Activated CD8-positive, alpha-beta T cell treated with anti-CD3 and anti-CD28 coated beads for 36 hours (primary cell): ENCODE measurements at regions of chr6 and their contacts with region 1.

Region 1: GRCh38 chr6:31597006-31597405 is 4.2 kb upstream of the NCR3 start:
- DNase-seq: peak; percentile 71
- ATAC-seq: peak; percentile 68
- H3K4me3 Mint-ChIP-seq: no peak overlapping the region
- H3K27ac Mint-ChIP-seq: peak overlapping the region; percentile 37
- H3K4me1 Mint-ChIP-seq: peaks cover 43% of the 10 kb centered on the region
- H3K27me3 Mint-ChIP-seq: no peaks in the 10 kb centered on the region
- CTCF ChIP-seq: peak; percentile 80

Region 2: GRCh38 chr6:31580807-31581433 is 16.1 kb before region 1 on chr6:
- CTCF ChIA-PET with region 1: interaction called, 2,542 read pairs
- POLR2A ChIA-PET with region 1: interaction called, 1,181 read pairs
- intact Hi-C with region 1: loop called (anchors 1 kb)
- DNase-seq: peak; percentile 92
- ATAC-seq: peak; percentile 55
- H3K4me3 Mint-ChIP-seq: peak overlapping the region; percentile 96
- H3K27ac Mint-ChIP-seq: peak overlapping the region; percentile 98
- H3K4me1 Mint-ChIP-seq: peaks cover 47% of the 10 kb centered on the region
- H3K27me3 Mint-ChIP-seq: no peaks in the 10 kb centered on the region
- CTCF ChIP-seq: peak; percentile 97

Region 3: DNA sequence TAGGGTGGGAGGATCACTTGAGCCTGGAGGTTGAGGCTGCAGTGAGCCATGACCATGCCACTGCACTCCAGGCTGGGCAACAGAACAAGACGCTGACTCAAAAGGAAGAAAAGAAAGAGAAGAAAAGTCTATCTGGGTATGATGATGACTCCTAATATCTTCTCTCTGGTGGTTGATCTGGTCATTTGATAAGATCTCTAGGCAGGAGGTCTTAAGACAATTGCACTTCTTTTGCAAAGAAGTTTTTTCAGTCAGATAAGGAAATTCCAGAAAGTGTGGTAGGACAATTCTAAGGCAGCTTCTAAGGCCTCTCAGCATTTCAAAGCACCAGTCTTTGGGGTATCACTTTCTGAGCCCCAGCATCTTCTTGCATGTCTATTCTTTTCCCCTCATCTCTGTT is 10.3 kb after region 1 on chr6:
- CTCF ChIA-PET with region 1: interaction called, 132 read pairs
- POLR2A ChIA-PET with region 1: no interaction called
- intact Hi-C with region 1: no loop called
- DNase-seq: no peak
- ATAC-seq: no peak
- H3K4me3 Mint-ChIP-seq: no peak overlapping the region
- H3K27ac Mint-ChIP-seq: no peak overlapping the region
- H3K4me1 Mint-ChIP-seq: peaks cover 2% of the 10 kb centered on the region
- H3K27me3 Mint-ChIP-seq: no peaks in the 10 kb centered on the region
- CTCF ChIP-seq: no peak

Region 4: DNA sequence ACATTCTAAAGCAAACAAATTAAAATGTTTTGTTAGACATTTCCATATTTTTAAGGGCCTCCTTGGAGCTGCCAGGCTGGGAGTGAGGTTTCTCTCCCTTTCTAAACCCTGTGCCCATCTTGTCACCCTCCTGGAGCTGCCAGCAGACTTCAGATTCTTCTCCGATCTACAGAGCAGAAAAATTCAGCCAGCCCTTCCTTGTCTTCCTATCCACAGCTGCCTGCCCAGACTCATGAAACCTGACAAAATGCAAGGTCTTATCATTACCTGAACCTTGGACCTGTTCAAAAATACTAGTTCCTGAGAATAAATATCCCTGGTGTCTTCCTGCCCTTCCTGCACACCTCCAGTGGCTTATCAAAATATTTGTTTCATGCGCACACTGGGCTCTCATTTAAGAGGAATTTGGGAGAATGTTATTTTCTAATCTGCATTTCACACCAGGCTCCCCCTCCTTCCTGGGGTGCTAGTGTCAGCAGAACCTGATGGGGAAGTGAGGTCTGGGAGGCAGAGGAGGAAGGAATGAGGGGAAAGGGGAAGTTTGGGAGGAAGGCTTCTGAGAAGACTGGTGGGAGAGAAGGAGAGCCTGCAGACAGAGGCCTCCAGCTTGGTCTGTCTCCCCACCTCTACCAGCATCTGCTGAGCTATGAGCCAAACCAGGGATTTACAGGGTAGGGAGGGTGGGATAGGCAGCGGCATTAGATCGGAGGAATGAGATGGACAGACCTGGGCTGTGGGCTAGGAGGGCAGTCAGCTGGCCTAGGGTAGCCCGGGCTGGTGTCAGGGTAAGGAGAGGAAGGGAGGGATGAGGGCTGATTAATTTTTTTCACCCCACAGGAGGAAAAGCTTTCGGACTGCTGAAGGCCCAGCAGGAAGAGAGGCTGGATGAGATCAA is 17.9 kb after region 1 on chr6 and contains the start of gene AIF1:
- CTCF ChIA-PET with region 1: interaction called, 132 read pairs
- POLR2A ChIA-PET with region 1: interaction called, 9 read pairs
- intact Hi-C with region 1: no loop called
- DNase-seq: no peak
- ATAC-seq: no peak
- H3K4me3 Mint-ChIP-seq: peak within 1 kb of the TSS; percentile 95
- H3K27ac Mint-ChIP-seq: peak within 1 kb of the TSS; percentile 96
- H3K4me1 Mint-ChIP-seq: peaks cover 43% of the 10 kb centered on the region
- H3K27me3 Mint-ChIP-seq: no peaks in the 10 kb centered on the region
- CTCF ChIP-seq: no peak
- total RNA-seq, gene AIF1: 240 to 253 TPM

Region 5: GRCh38 chr6:31680840-31681671 is 84.0 kb after region 1 on chr6 and contains the start of gene LY6G5C:
- CTCF ChIA-PET with region 1: no interaction called
- POLR2A ChIA-PET with region 1: no interaction called
- intact Hi-C with region 1: no loop called
- DNase-seq: peak; percentile 73
- ATAC-seq: peak; percentile 85
- H3K4me3 Mint-ChIP-seq: peak within 1 kb of the TSS; percentile 65
- H3K27ac Mint-ChIP-seq: peak within 1 kb of the TSS; percentile 49
- H3K4me1 Mint-ChIP-seq: peaks cover 11% of the 10 kb centered on the region
- H3K27me3 Mint-ChIP-seq: no peaks in the 10 kb centered on the region
- CTCF ChIP-seq: peak; percentile 53
- total RNA-seq, gene LY6G5C: 1.6 to 2.3 TPM